HepG2 (cell line): ENCODE measurements at regions of chr7 and their contacts with region 1.

Region 1: GRCh38 chr7:44240983-44241510 is 40.3 kb downstream of the YKT6 start:
- DNase-seq: peak; percentile 77
- ATAC-seq: peak; percentile 94
- H3K4me3 ChIP-seq: peak overlapping the region; percentile 38 to 69 (median 52); a peak in 5 of 6 replicates
- H3K27ac ChIP-seq: no peak overlapping the region
- H3K4me1 ChIP-seq: no peaks in the 10 kb centered on the region
- H3K27me3 ChIP-seq: peaks cover 23 to 69% of the 10 kb centered on the region in 2 experiments
- CTCF ChIP-seq: peak; percentile 91
- EP300 ChIP-seq: no peak
- POLR2A ChIP-seq: no peak
- RAD21 ChIP-seq: peak; percentile 69; the same call in 1 of the 2 replicates

Region 2: GRCh38 chr7:44307301-44307900 is 66.4 kb after region 1 on chr7:
- CTCF ChIA-PET with region 1: no interaction called
- POLR2A ChIA-PET with region 1: no interaction called
- in situ Hi-C with region 1: no loop called
- intact Hi-C with region 1: loop called (anchors 1 kb)
- DNase-seq: peak; percentile 16
- ATAC-seq: peak; percentile 52
- H3K4me3 ChIP-seq: no peak overlapping the region
- H3K27ac ChIP-seq: no peak overlapping the region
- H3K4me1 ChIP-seq: peaks cover 11% of the 10 kb centered on the region; the same call in 1 of the 2 replicates
- H3K27me3 ChIP-seq: peaks cover 8 to 40% of the 10 kb centered on the region in 2 experiments
- CTCF ChIP-seq: peak; percentile 46
- EP300 ChIP-seq: no peak
- POLR2A ChIP-seq: no peak
- RAD21 ChIP-seq: no peak